ENCODE measurements at regions of chr14 and their contacts with region 1.

Region 1: DNA sequence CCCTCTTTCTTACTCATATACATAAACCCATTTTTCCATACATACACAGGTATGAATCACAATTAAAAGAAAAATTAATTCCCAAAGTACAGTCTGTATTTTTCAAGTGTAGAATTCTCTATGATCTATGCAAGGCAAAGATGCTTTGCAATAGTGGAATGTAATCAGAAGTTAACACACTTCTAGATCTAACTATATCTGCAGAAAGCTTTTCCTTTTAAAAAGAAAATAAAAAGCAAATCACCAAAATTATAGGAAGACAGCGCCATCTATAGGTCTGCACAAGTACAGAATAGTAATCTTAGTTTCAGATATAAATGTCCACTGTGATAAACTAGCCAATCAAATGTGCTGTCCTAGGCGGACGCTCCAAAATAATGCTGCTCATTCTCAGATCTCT is 22.0 kb downstream of the SLC25A21 start:
- DNase-seq: peak; percentile 13
- H3K4me3 ChIP-seq: no peak overlapping the region
- H3K27ac ChIP-seq: no peak overlapping the region
- H3K27me3 ChIP-seq: no peaks in the 10 kb centered on the region
- CTCF ChIP-seq: peak; percentile 76

Region 2: GRCh38 chr14:36070031-36070719 is 1080.2 kb before region 1 on chr14:
- CTCF ChIA-PET with region 1: interaction called, 20 read pairs
- POLR2A ChIA-PET with region 1: no interaction called
- DNase-seq: peak; percentile 32
- H3K4me3 ChIP-seq: no peak overlapping the region
- H3K27ac ChIP-seq: no peak overlapping the region
- H3K27me3 ChIP-seq: no peaks in the 10 kb centered on the region
- CTCF ChIP-seq: peak; percentile 92

Region 3: GRCh38 chr14:36655963-36656686 is 494.3 kb before region 1 on chr14:
- CTCF ChIA-PET with region 1: interaction called, 11 read pairs
- POLR2A ChIA-PET with region 1: no interaction called
- DNase-seq: no peak
- H3K4me3 ChIP-seq: no peak overlapping the region
- H3K27ac ChIP-seq: no peak overlapping the region
- H3K27me3 ChIP-seq: peaks cover 85% of the 10 kb centered on the region
- CTCF ChIP-seq: peak; percentile 21

Region 4: GRCh38 chr14:36843410-36843809 is 307.0 kb before region 1 on chr14:
- CTCF ChIA-PET with region 1: no interaction called
- POLR2A ChIA-PET with region 1: no interaction called
- DNase-seq: no peak
- H3K4me3 ChIP-seq: no peak overlapping the region
- H3K27ac ChIP-seq: no peak overlapping the region
- H3K27me3 ChIP-seq: peaks cover 10% of the 10 kb centered on the region
- CTCF ChIP-seq: no peak

Region 5: DNA sequence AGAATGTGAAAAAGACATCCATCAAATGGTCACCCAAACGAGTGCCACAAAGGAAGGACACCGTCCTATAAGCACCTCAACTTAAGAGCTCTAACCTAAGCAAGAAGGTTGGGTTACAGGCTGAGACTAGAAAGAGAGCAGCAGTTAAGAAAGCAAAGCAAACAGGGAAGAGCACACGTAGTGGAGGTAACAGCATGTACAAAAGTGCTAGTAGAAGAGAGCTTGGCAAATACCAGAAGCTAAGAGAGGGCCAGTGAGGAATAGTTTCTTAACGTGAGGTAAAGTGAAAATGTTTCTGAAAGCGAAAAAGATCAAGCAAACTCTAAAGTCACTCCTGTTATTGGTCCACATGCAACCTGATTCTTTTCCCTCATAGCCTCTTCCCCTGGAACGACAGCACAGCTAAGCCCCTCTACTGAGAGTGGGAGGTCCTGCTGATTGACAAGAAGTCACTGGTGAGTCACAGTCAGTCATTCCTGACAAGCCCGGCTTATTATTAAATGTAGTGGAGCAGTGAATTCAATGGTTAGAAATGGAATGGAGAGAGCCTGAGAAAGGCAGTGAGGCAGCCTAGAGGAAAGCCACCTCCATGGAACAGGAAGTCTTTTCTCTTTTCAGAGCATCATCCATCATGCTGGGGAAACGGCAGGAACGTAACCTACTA is 182.4 kb before region 1 on chr14:
- CTCF ChIA-PET with region 1: interaction called, 11 read pairs
- POLR2A ChIA-PET with region 1: no interaction called
- DNase-seq: no peak
- H3K4me3 ChIP-seq: no peak overlapping the region
- H3K27ac ChIP-seq: no peak overlapping the region
- H3K27me3 ChIP-seq: no peaks in the 10 kb centered on the region
- CTCF ChIP-seq: no peak

Region 6: GRCh38 chr14:37131205-37131604 is 19.2 kb before region 1 on chr14:
- CTCF ChIA-PET with region 1: interaction called, 25 read pairs
- POLR2A ChIA-PET with region 1: no interaction called
- DNase-seq: no peak
- H3K4me3 ChIP-seq: no peak overlapping the region
- H3K27ac ChIP-seq: no peak overlapping the region
- H3K27me3 ChIP-seq: no peaks in the 10 kb centered on the region
- CTCF ChIP-seq: no peak

Region 7: GRCh38 chr14:37172024-37172869 is 21.8 kb after region 1 on chr14 and contains the start of gene SLC25A21:
- CTCF ChIA-PET with region 1: interaction called, 25 read pairs
- POLR2A ChIA-PET with region 1: interaction called, 3 read pairs
- DNase-seq: peak; percentile 59
- H3K4me3 ChIP-seq: peak within 1 kb of the TSS; percentile 93
- H3K27ac ChIP-seq: peak within 1 kb of the TSS; percentile 97
- H3K27me3 ChIP-seq: no peaks in the 10 kb centered on the region
- CTCF ChIP-seq: peak; percentile 25; the same call in 1 of the 2 replicates
- polyA plus RNA-seq, gene SLC25A21: 1.5 and 2.0 TPM in 2 replicates

Measured in AG04450 (cell line).